ENCODE measurements at regions of chr7 and their contacts with region 1.

Region 1: GRCh38 chr7:149261829-149262617 is at the start of gene ZNF783:
- DNase-seq: peak; percentile 83
- H3K4me3 Mint-ChIP-seq: peak within 1 kb of the TSS; percentile 78
- H3K27ac Mint-ChIP-seq: peak within 1 kb of the TSS; percentile 90
- H3K4me1 Mint-ChIP-seq: peaks cover 33% of the 10 kb centered on the region
- H3K27me3 Mint-ChIP-seq: no peaks in the 10 kb centered on the region
- total RNA-seq, gene ZNF783: 19.0 to 21.7 TPM

Region 2: DNA sequence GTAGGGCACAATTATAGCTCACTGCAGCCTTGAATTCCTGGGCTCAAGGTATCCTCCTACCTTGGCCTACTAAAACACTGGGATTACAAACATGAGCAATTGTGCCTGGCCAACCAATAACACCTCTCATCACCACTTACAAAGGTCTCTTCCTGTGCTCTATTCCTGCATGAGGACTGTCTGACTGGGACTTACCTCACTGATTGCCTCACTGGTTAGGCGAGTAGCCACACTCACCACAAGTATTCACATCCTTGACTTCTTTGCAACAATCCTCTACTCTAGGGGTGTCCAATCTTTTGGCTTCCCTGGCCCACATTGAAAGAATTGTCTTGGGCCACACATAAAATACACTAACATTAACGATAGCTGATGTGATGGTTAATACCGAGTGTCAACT is 211.1 kb before region 1 on chr7:
- CTCF ChIA-PET with region 1: no interaction called
- POLR2A ChIA-PET with region 1: no interaction called
- DNase-seq: no peak
- H3K4me3 Mint-ChIP-seq: no peak overlapping the region
- H3K27ac Mint-ChIP-seq: no peak overlapping the region
- H3K4me1 Mint-ChIP-seq: no peaks in the 10 kb centered on the region
- H3K27me3 Mint-ChIP-seq: peaks cover 2% of the 10 kb centered on the region

Region 3: GRCh38 chr7:149248777-149249176 is 13.2 kb before region 1 on chr7:
- CTCF ChIA-PET with region 1: interaction called, 47 read pairs
- POLR2A ChIA-PET with region 1: no interaction called
- DNase-seq: no peak
- H3K4me3 Mint-ChIP-seq: no peak overlapping the region
- H3K27ac Mint-ChIP-seq: peak overlapping the region; percentile 34
- H3K4me1 Mint-ChIP-seq: peaks cover 33% of the 10 kb centered on the region
- H3K27me3 Mint-ChIP-seq: no peaks in the 10 kb centered on the region

Region 4: GRCh38 chr7:149284850-149285626 is 23.0 kb after region 1 on chr7:
- CTCF ChIA-PET with region 1: interaction called, 15 read pairs
- POLR2A ChIA-PET with region 1: interaction called, 4 read pairs
- DNase-seq: peak; percentile 98
- H3K4me3 Mint-ChIP-seq: peak overlapping the region; percentile 83
- H3K27ac Mint-ChIP-seq: peak overlapping the region; percentile 90
- H3K4me1 Mint-ChIP-seq: peaks cover 55% of the 10 kb centered on the region
- H3K27me3 Mint-ChIP-seq: no peaks in the 10 kb centered on the region

Region 5: DNA sequence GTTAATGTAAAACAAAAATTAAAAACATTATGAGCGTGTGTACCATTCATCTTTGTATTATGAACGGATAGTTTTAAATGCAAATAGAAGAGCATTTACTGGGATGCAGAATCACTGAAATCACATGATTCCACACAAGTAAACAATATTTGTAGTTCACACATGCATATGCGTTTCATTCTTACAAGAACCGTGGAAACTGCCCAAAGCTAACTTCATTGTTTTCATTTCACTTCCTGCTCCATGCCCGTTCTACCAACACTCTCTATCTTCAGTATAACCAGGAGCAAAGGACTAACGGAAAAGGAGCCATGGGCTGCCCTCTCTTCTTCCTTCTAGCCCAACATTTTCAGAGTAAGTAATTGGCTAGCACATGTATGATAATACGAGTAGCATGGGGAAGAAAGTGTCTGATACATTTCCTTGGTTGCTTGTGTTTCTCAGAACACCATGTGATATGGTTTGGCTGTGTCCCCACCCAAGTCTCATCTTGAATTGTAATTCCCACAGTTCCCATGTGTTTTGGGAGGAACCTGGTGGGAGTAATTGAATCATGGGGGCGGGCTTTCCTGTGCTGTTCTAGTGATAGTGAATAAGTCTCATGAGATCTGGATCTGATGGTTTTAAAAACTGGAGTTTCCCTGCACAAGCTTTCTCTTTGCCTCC is 38.7 kb after region 1 on chr7:
- CTCF ChIA-PET with region 1: no interaction called
- POLR2A ChIA-PET with region 1: no interaction called
- DNase-seq: no peak
- H3K4me3 Mint-ChIP-seq: no peak overlapping the region
- H3K27ac Mint-ChIP-seq: no peak overlapping the region
- H3K4me1 Mint-ChIP-seq: no peaks in the 10 kb centered on the region
- H3K27me3 Mint-ChIP-seq: no peaks in the 10 kb centered on the region